HEK293 (cell line): ENCODE measurements at regions of chr5 and their contacts with region 1.

Region 1: DNA sequence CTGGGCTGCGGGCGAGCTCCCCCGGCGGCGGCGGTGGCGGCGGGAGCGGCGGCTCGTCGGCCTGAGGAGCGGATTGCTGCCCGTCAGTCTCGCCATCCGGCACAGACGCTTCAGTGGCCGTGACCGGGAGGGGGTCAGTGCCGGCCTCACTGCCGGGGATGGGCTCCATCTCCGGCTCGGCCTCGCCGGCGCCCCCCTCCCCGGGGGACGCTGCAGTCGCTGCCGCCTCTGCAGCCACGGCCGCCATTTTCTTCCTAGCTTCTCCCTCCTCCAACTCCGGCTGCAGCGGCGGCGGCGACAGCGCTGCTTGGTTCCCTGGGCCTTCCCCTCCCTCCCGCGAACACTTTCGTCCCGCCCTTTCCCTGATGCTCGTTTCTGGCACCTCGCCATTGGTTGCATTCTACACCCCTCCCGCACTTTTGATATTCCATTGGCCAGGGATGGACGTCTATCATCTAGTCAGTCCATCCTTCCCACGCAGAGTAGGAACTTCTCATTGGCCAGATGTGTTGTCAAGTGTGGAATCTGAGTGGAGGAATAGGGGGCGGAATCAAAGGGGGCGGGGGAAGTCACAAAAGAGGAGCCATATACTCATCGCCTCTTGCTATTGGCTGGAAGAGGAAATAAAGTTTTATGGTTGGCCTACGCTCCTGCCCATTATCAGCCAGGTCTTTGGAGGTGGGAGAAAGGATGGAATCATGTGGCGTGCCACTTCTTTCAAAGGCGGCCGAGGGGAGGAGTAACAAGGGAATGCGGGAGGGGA is at the start of gene PWWP2A:
- H3K4me3 ChIP-seq: peak within 1 kb of the TSS; percentile 86
- H3K27ac ChIP-seq: peak within 1 kb of the TSS; percentile 86; the same call in 1 of the 2 replicates
- H3K4me1 ChIP-seq: peaks cover 4% of the 10 kb centered on the region; the same call in 1 of the 2 replicates
- CTCF ChIP-seq: peak; percentile 92

Region 2: GRCh38 chr5:160054831-160055230 is 64.5 kb before region 1 on chr5:
- CTCF ChIA-PET with region 1: no interaction called
- POLR2A ChIA-PET with region 1: no interaction called
- H3K4me3 ChIP-seq: no peak overlapping the region
- H3K27ac ChIP-seq: no peak overlapping the region
- H3K4me1 ChIP-seq: no peaks in the 10 kb centered on the region
- CTCF ChIP-seq: no peak

Region 3: GRCh38 chr5:160105686-160106360 is 13.5 kb before region 1 on chr5:
- CTCF ChIA-PET with region 1: no interaction called
- POLR2A ChIA-PET with region 1: no interaction called
- H3K4me3 ChIP-seq: no peak overlapping the region
- H3K27ac ChIP-seq: no peak overlapping the region
- H3K4me1 ChIP-seq: no peaks in the 10 kb centered on the region
- CTCF ChIP-seq: no peak

Region 4: DNA sequence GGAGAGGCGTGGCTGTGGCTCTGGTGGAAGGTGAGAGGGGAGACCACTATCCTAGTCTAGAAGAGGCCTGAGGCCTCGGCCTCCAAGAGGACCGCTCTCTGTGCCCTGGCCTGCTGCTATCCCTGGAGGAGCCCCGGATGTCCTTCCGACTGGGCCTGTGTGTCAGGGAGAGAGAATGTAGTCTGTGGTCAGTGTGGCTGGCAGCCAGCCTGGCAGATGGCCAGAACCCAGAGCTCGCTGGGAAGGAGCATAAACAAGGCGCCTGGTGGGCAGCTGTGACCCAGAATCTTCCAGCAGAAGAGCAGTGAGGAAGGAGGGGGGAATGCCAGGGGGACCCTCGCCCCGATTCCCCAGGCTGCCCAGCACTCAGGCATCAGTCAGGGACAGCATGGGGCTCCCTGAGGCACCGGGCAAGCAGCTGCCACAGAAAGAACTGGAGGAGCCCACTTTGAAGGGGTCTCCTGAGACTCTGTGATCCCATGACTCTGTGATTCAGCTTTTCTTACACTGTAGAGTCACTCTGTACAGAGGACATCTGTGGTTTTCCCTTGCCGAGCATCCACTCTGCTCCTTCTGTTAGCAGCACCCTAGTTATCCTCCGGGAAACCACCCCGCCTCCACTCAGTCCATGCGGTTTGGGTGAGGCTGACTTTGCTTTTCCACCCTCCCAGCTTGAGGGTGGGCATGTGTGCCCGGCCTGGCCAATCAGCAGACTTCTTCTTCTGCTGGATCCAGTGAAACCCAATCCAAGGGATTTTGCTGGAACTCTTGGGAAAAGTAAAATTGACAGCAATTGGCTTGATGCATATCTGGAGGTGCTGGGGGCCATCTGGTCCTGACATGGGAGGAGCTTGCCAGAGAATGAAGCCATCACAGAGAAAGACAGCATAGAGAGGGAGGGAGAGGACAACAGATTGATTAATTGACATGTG is 46.1 kb after region 1 on chr5:
- CTCF ChIA-PET with region 1: no interaction called
- POLR2A ChIA-PET with region 1: interaction called, 10 read pairs
- H3K4me3 ChIP-seq: peak overlapping the region; percentile 25
- H3K27ac ChIP-seq: peak overlapping the region; percentile 89
- H3K4me1 ChIP-seq: peaks cover 18% of the 10 kb centered on the region
- CTCF ChIP-seq: no peak